ENCODE measurements at regions of chr11 and their contacts with region 1.

Region 1: GRCh38 chr11:32583459-32584271 is at the start of gene EIF3M:
- DNase-seq: peak; percentile 94 to 95 (median 94)
- H3K4me3 ChIP-seq: peak within 1 kb of the TSS; percentile 73 to 89
- H3K4me3 Mint-ChIP-seq: peak within 1 kb of the TSS; percentile 94 to 99 (median 97)
- H3K27ac ChIP-seq: peak within 1 kb of the TSS; percentile 93
- H3K27ac Mint-ChIP-seq: peak within 1 kb of the TSS; percentile 95 to 99 (median 98)
- H3K4me1 ChIP-seq: peaks cover 41% of the 10 kb centered on the region
- H3K4me1 Mint-ChIP-seq: peaks cover 31 to 51% (median 39%) of the 10 kb centered on the region in 4 donors
- H3K27me3 ChIP-seq: no peaks in the 10 kb centered on the region
- H3K27me3 Mint-ChIP-seq: no peaks in the 10 kb centered on the region
- total RNA-seq, gene EIF3M: 214 to 223 TPM

Region 2: DNA sequence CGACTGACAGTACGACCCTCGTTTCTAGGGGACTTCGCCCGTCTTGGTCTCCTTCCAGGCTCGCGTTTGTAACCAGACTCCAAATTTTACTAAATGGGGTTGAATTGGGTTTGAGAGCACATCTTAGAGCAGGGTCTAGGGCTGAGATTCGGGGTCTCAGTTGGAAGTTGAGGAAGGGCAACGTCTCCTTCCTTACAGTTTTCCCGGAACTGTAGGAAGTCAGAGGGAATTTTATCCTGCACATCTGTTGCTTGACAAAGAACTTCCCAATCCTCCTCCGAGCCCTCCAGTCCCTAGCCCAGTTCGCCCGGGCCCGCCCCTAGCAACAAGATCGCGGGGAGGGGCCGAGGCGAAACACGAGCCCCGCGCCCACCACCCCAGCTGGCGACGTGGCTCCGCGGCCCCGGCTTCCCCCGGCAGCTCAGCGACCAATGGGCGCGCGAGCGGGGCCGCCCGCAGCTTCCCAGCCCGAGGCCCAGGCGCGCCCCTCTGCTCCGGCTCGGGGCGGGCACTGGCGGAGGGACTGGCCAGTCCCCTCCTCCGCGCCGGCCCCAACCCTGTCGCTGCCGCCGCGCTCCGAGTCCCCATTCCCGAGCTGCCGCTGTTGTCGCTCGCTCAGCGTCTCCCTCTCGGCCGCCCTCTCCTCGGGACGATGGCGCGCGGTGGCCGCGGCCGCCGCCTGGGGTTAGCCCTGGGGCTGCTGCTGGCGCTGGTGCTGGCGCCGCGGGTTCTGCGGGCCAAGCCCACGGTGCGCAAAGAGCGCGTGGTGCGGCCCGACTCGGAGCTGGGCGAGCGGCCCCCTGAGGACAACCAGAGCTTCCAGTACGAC is 492.9 kb before region 1 on chr11 and contains the start of gene RCN1:
- CTCF ChIA-PET with region 1: no interaction called
- POLR2A ChIA-PET with region 1: no interaction called
- intact Hi-C with region 1: loop called (anchors 10 kb)
- DNase-seq: no peak
- H3K4me3 ChIP-seq: peak within 1 kb of the TSS; percentile 57 to 90
- H3K4me3 Mint-ChIP-seq: peak within 1 kb of the TSS; percentile 81 to 89 (median 86)
- H3K27ac ChIP-seq: peak within 1 kb of the TSS; percentile 54
- H3K27ac Mint-ChIP-seq: peak within 1 kb of the TSS; percentile 47 to 95 (median 88)
- H3K4me1 ChIP-seq: peaks cover 16% of the 10 kb centered on the region
- H3K4me1 Mint-ChIP-seq: peaks cover 14 to 35% (median 21%) of the 10 kb centered on the region in 4 donors
- H3K27me3 ChIP-seq: no peaks in the 10 kb centered on the region
- H3K27me3 Mint-ChIP-seq: peaks cover 0 to 7% of the 10 kb centered on the region in 2 donors
- total RNA-seq, gene RCN1: 6.3 to 6.9 TPM

Region 3: DNA sequence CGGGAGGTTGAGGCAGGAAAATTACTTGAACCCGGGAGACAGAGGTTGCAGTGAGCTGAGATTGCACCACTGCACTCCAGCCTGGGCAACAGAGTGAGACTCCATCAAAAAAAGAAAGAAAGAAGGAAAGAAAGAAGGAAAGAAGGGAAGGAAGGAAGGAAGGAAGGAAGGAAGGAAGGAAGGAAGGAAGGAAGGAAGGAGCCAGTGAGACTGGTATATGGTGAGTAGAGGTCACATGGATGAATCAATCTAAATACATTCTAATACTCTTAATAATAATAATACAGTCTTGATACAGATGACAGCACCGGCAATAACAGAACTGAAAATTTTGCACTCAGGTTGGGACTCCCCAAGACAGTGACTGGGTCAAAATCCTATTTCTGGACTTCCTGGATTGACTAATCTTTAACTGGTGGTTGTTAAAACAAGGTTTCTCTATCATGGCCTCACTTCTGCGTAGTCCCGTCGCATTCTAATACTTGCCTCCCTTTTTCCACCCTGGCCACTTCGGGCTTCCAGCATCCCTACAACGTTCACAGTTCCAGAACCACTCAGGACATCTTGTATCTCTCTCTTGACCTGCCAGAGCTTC is 53.6 kb before region 1 on chr11:
- CTCF ChIA-PET with region 1: no interaction called
- POLR2A ChIA-PET with region 1: no interaction called
- intact Hi-C with region 1: no loop called
- DNase-seq: no peak
- H3K4me3 ChIP-seq: no peak overlapping the region
- H3K4me3 Mint-ChIP-seq: no peak overlapping the region
- H3K27ac ChIP-seq: no peak overlapping the region
- H3K27ac Mint-ChIP-seq: no peak overlapping the region
- H3K4me1 ChIP-seq: no peaks in the 10 kb centered on the region
- H3K4me1 Mint-ChIP-seq: no peaks in the 10 kb centered on the region
- H3K27me3 ChIP-seq: no peaks in the 10 kb centered on the region
- H3K27me3 Mint-ChIP-seq: peaks cover 4 to 11% of the 10 kb centered on the region in 2 donors

Region 4: GRCh38 chr11:32571039-32571438 is 12.6 kb before region 1 on chr11:
- CTCF ChIA-PET with region 1: no interaction called
- POLR2A ChIA-PET with region 1: no interaction called
- intact Hi-C with region 1: no loop called
- DNase-seq: no peak
- H3K4me3 ChIP-seq: no peak overlapping the region
- H3K4me3 Mint-ChIP-seq: no peak overlapping the region
- H3K27ac ChIP-seq: no peak overlapping the region
- H3K27ac Mint-ChIP-seq: no peak overlapping the region
- H3K4me1 ChIP-seq: peaks cover 6% of the 10 kb centered on the region
- H3K4me1 Mint-ChIP-seq: peaks cover 7 to 17% (median 8%) of the 10 kb centered on the region in 4 donors
- H3K27me3 ChIP-seq: no peaks in the 10 kb centered on the region
- H3K27me3 Mint-ChIP-seq: peaks cover 8 to 15% of the 10 kb centered on the region in 2 donors

Region 5: GRCh38 chr11:32893343-32894148 is 309.9 kb after region 1 on chr11:
- CTCF ChIA-PET with region 1: no interaction called
- POLR2A ChIA-PET with region 1: no interaction called
- intact Hi-C with region 1: loop called (anchors 1 kb)
- DNase-seq: peak in 3 of 5 donors; percentile 36 to 61 (median 38)
- H3K4me3 ChIP-seq: peak overlapping the region; percentile 57 to 72
- H3K4me3 Mint-ChIP-seq: peak overlapping the region; percentile 87 to 96 (median 94)
- H3K27ac ChIP-seq: peak overlapping the region; percentile 58
- H3K27ac Mint-ChIP-seq: peak overlapping the region; percentile 84 to 94 (median 88)
- H3K4me1 ChIP-seq: peaks cover 17% of the 10 kb centered on the region
- H3K4me1 Mint-ChIP-seq: peaks cover 20 to 36% (median 29%) of the 10 kb centered on the region in 4 donors
- H3K27me3 ChIP-seq: no peaks in the 10 kb centered on the region
- H3K27me3 Mint-ChIP-seq: no peaks in the 10 kb centered on the region

Measured in CD4-positive, alpha-beta memory T cell (primary cell).